ENCODE measurements at regions of chrX and their contacts with region 1.

Region 1: DNA sequence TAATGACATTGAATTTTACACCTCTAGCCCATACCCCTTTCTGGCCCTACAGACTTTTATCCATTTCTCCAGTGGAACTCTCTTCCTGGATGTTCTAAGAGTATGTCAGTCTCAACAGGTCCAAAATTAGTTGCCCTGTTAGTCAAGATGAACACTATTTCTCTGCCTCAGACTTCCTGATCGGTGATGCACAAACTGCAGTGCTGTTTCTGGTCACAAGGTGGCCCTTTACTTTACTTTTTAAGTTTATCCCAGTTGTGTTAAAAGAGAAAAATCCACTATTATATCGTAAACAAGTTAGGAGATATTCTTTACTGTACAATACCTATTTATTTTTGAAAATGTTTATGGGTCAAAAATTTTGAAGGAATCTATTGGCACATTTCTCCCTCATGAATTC is 13.1 kb downstream of the TCEAL7 start:
- DNase-seq: peak; percentile 16
- ATAC-seq: peak; percentile 77
- H3K4me3 ChIP-seq: no peak overlapping the region
- H3K27ac ChIP-seq: no peak overlapping the region
- H3K4me1 ChIP-seq: no peaks in the 10 kb centered on the region
- H3K27me3 ChIP-seq: no peaks in the 10 kb centered on the region
- CTCF ChIP-seq: peak; percentile 59 to 61 (median 59)
- POLR2A ChIP-seq: no peak
- RAD21 ChIP-seq: peak; percentile 61

Region 2: GRCh38 chrX:103254921-103255493 is 88.1 kb before region 1 on chrX and contains the start of gene TCEAL8:
- CTCF ChIA-PET with region 1: no interaction called
- POLR2A ChIA-PET with region 1: no interaction called
- RAD21 ChIA-PET with region 1: no interaction called
- intact Hi-C with region 1: no loop called
- DNase-seq: peak; percentile 63
- ATAC-seq: peak; percentile 81
- H3K4me3 ChIP-seq: peak within 1 kb of the TSS; percentile 78 to 82
- H3K27ac ChIP-seq: peak within 1 kb of the TSS; percentile 89
- H3K4me1 ChIP-seq: peaks cover 3 to 15% of the 10 kb centered on the region in 2 experiments; a peak in 2 of 4 replicates
- H3K27me3 ChIP-seq: no peaks in the 10 kb centered on the region
- CTCF ChIP-seq: no peak
- POLR2A ChIP-seq: no peak
- RAD21 ChIP-seq: no peak
- total RNA-seq, gene TCEAL8: 37.3 TPM

Region 3: GRCh38 chrX:103464774-103465117 is 121.6 kb after region 1 on chrX:
- CTCF ChIA-PET with region 1: interaction called, 13 read pairs
- POLR2A ChIA-PET with region 1: no interaction called
- RAD21 ChIA-PET with region 1: no interaction called
- intact Hi-C with region 1: loop called (anchors 2 kb)
- DNase-seq: peak; percentile 21
- ATAC-seq: peak; percentile 91
- H3K4me3 ChIP-seq: no peak overlapping the region
- H3K27ac ChIP-seq: no peak overlapping the region
- H3K4me1 ChIP-seq: no peaks in the 10 kb centered on the region
- H3K27me3 ChIP-seq: no peaks in the 10 kb centered on the region
- CTCF ChIP-seq: peak; percentile 59 to 71 (median 67); a peak in 5 of 6 replicates
- POLR2A ChIP-seq: no peak
- RAD21 ChIP-seq: peak; percentile 74

Measured in HCT116 (cell line).